H1 (cell line): ENCODE measurements at regions of chr1 and their contacts with region 1.

Region 1: GRCh38 chr1:94805912-94806311 is 14.2 kb upstream of the SLC44A3 start:
- DNase-seq: peak in 1 of 2 experiments; percentile 75
- H3K4me3 ChIP-seq: no peak overlapping the region
- H3K27ac ChIP-seq: no peak overlapping the region
- H3K4me1 ChIP-seq: peaks cover 0 to 10% (median 3%) of the 10 kb centered on the region in 4 experiments; a peak in 4 of 7 replicates
- H3K27me3 ChIP-seq: no peaks in the 10 kb centered on the region
- CTCF ChIP-seq: peak; percentile 76 to 88 (median 84)
- EP300 ChIP-seq: no peak
- POLR2A ChIP-seq: no peak
- RAD21 ChIP-seq: peak; percentile 98 to 99

Region 2: GRCh38 chr1:94481473-94481933 is 324.4 kb before region 1 on chr1:
- CTCF ChIA-PET with region 1: interaction called, 29 read pairs
- POLR2A ChIA-PET with region 1: no interaction called
- DNase-seq: peak; percentile 25 to 50
- H3K4me3 ChIP-seq: no peak overlapping the region
- H3K27ac ChIP-seq: no peak overlapping the region
- H3K4me1 ChIP-seq: no peaks in the 10 kb centered on the region
- H3K27me3 ChIP-seq: no peaks in the 10 kb centered on the region
- CTCF ChIP-seq: peak; percentile 46 to 89 (median 78)
- EP300 ChIP-seq: no peak
- POLR2A ChIP-seq: no peak
- RAD21 ChIP-seq: peak; percentile 73 to 81

Region 3: DNA sequence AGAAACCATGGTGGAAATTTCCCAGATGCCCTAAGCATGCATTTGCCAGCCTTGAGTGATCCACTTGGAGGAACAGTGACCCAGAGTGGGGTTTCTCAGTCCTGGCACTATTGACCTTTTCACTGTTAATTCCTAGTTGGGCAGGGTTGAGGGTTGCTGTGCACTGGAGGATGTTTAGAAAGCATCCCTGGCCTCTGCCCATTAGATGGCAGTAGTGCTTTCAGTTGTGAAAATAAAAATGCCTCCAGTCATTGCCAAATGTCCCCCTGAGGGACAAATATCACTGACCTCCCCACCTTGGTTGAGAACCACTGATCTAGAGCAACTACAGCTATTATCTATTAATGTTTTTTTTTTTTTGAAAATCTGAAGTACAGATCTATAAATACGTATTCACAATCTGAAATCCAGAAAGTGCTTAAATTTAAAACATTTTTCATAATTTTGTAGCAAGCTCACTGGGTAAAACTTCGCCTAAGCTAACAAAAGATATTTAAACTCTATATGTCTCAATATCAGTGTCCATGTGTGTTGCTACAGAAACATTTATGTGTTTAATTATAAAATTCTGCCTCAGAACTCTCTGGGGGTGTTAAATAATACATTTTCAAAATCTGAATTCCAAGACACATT is 291.7 kb before region 1 on chr1:
- CTCF ChIA-PET with region 1: interaction called, 212 read pairs
- POLR2A ChIA-PET with region 1: no interaction called
- DNase-seq: peak in 1 of 2 experiments; percentile 49
- H3K4me3 ChIP-seq: no peak overlapping the region
- H3K27ac ChIP-seq: no peak overlapping the region
- H3K4me1 ChIP-seq: no peaks in the 10 kb centered on the region
- H3K27me3 ChIP-seq: no peaks in the 10 kb centered on the region
- CTCF ChIP-seq: peak; percentile 19 to 71 (median 66)
- EP300 ChIP-seq: no peak
- POLR2A ChIP-seq: no peak
- RAD21 ChIP-seq: peak; percentile 78 to 81

Region 4: GRCh38 chr1:94541175-94542087 is 264.5 kb before region 1 on chr1 and contains the start of gene F3:
- CTCF ChIA-PET with region 1: interaction called, 46 read pairs
- POLR2A ChIA-PET with region 1: interaction called, 3 read pairs
- DNase-seq: peak; percentile 50 to 88
- H3K4me3 ChIP-seq: peak within 1 kb of the TSS; percentile 62 to 82 (median 76)
- H3K27ac ChIP-seq: no peak within 1 kb of the TSS
- H3K4me1 ChIP-seq: peaks cover 2 to 6% (median 3%) of the 10 kb centered on the region in 4 experiments; a peak in 6 of 7 replicates
- H3K27me3 ChIP-seq: peaks cover 2 to 12% (median 7%) of the 10 kb centered on the region in 4 experiments; a peak in 6 of 7 replicates
- CTCF ChIP-seq: peak in 1 of 3 experiments; percentile 25; a peak in 1 of 4 replicates
- EP300 ChIP-seq: no peak
- POLR2A ChIP-seq: peak in 1 of 2 experiments; percentile 67; a peak in 2 of 3 replicates
- RAD21 ChIP-seq: no peak
- total RNA-seq, gene F3: 6.1 and 8.6 TPM in 2 replicates

Region 5: DNA sequence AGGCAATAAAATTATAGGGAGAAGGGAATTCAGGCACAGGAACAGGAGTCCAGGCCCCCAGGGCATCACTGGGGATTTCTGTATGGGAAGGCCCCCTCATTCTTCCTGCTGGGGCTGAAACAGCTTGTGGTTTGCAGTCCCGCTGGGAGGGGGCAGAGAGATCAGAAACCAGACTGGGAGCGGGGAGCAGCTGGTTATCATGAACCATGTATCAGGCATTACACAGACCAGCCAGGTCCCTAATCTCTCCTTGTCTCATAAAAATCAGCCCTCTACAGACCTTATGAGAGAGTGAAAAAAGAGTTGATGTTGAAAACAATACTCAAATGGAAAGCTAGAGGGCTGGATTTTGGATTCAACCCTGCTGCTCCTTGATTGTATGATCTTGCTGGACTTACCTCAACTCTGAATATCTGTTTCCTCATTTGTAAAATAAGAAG is 170.9 kb before region 1 on chr1:
- CTCF ChIA-PET with region 1: interaction called, 15 read pairs
- POLR2A ChIA-PET with region 1: no interaction called
- DNase-seq: no peak
- H3K4me3 ChIP-seq: no peak overlapping the region
- H3K27ac ChIP-seq: no peak overlapping the region
- H3K4me1 ChIP-seq: peaks cover 0 to 6% (median 3%) of the 10 kb centered on the region in 4 experiments; a peak in 3 of 7 replicates
- H3K27me3 ChIP-seq: no peaks in the 10 kb centered on the region
- CTCF ChIP-seq: no peak
- EP300 ChIP-seq: no peak
- POLR2A ChIP-seq: no peak
- RAD21 ChIP-seq: no peak

Region 6: DNA sequence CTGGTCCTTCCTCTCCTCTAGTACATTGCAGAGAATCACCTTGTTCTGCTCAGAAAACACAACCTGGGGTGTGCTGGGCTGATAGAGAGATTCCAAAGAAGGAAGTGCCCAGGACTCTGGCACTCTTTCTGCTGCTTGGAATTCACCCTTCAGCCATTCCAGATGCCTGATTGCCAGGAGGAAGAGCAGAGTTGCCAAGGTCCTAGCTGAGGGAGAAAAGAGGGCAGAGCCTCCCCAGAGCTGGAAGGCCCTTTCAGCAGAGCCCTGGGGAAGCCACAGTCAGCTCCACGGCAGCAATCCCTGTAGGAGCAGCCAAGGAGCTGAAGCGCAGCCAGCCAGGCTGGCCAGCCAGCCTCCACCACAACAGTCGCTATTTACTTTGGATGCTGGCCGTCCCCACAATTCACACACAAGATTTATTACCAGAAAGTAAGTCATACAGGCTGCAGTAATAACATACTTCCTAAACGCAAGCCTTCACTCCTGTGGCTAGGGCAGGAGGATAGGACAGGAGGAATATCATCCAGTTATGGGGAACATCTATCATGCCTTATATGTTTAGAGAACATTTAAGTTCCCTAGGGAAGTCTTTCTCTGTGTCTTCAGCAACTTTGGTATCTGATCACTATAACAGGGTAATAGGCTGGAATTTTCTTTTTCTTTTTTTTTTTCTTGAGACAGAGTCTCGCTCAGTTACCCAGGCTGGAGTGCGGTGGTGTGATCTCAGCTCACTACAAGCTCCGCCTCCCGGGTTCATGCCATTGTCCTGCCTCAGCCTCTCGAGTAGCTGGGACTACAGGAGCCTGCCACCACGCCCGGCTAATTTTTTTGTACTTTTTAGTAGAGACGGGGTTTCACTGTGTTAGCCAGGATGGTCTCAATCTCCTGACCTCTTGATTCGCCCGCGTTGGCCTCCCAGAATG is 22.3 kb before region 1 on chr1:
- CTCF ChIA-PET with region 1: interaction called, 10 read pairs
- POLR2A ChIA-PET with region 1: no interaction called
- DNase-seq: no peak
- H3K4me3 ChIP-seq: no peak overlapping the region
- H3K27ac ChIP-seq: no peak overlapping the region
- H3K4me1 ChIP-seq: peaks cover 0 to 3% (median 0%) of the 10 kb centered on the region in 4 experiments; a peak in 1 of 7 replicates
- H3K27me3 ChIP-seq: no peaks in the 10 kb centered on the region
- CTCF ChIP-seq: no peak
- EP300 ChIP-seq: no peak
- POLR2A ChIP-seq: no peak
- RAD21 ChIP-seq: no peak